ENCODE measurements at regions of chr6 and their contacts with region 1.

Region 1: GRCh38 chr6:22722913-22723312 is 153.5 kb downstream of the HDGFL1 start:
- DNase-seq: no peak
- H3K4me3 ChIP-seq: no peak overlapping the region
- H3K27ac ChIP-seq: no peak overlapping the region
- H3K27me3 ChIP-seq: no peaks in the 10 kb centered on the region
- CTCF ChIP-seq: no peak

Region 2: GRCh38 chr6:21961252-21961651 is 761.7 kb before region 1 on chr6:
- CTCF ChIA-PET with region 1: interaction called, 14 read pairs
- POLR2A ChIA-PET with region 1: no interaction called
- DNase-seq: no peak
- H3K4me3 ChIP-seq: no peak overlapping the region
- H3K27ac ChIP-seq: no peak overlapping the region
- H3K27me3 ChIP-seq: no peaks in the 10 kb centered on the region
- CTCF ChIP-seq: no peak

Region 3: GRCh38 chr6:22558334-22558747 is 164.6 kb before region 1 on chr6:
- CTCF ChIA-PET with region 1: no interaction called
- POLR2A ChIA-PET with region 1: no interaction called
- DNase-seq: no peak
- H3K4me3 ChIP-seq: no peak overlapping the region
- H3K27ac ChIP-seq: no peak overlapping the region
- H3K27me3 ChIP-seq: no peaks in the 10 kb centered on the region
- CTCF ChIP-seq: no peak

Region 4: DNA sequence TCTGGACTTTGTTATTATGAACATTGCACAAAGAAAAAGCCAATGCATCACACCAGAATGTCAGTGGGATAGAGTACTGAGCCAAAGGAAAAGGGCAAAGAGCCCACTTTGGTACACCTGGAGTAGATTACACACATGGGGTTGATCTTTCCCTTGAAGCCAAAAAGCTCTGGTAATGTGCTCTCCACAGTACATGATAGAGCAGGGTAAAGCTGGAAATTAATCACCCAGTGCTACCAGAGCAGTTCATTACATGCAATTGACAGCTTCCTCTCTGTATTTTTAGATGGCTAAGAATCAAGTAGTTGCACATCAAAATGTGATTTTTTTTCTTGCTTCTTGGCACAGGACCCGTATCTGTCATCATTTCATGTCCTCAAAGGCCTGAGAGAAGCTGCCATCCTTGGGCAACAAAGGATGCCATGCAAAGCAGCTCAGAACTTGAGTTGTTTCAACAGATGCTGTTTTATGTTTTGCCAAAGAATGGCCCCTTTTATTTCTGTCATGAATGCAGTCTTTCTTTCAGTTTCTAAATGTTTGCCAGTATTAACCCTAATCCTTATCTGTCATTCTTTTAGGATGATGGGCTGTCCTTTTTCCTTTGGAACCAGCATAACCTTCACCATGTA is 65.4 kb before region 1 on chr6:
- CTCF ChIA-PET with region 1: no interaction called
- POLR2A ChIA-PET with region 1: no interaction called
- DNase-seq: no peak
- H3K4me3 ChIP-seq: no peak overlapping the region
- H3K27ac ChIP-seq: no peak overlapping the region
- H3K27me3 ChIP-seq: no peaks in the 10 kb centered on the region
- CTCF ChIP-seq: no peak

Measured in AG04450 (cell line).